Caco-2 (cell line): ENCODE measurements at regions of chr2 and their contacts with region 1.

Region 1: DNA sequence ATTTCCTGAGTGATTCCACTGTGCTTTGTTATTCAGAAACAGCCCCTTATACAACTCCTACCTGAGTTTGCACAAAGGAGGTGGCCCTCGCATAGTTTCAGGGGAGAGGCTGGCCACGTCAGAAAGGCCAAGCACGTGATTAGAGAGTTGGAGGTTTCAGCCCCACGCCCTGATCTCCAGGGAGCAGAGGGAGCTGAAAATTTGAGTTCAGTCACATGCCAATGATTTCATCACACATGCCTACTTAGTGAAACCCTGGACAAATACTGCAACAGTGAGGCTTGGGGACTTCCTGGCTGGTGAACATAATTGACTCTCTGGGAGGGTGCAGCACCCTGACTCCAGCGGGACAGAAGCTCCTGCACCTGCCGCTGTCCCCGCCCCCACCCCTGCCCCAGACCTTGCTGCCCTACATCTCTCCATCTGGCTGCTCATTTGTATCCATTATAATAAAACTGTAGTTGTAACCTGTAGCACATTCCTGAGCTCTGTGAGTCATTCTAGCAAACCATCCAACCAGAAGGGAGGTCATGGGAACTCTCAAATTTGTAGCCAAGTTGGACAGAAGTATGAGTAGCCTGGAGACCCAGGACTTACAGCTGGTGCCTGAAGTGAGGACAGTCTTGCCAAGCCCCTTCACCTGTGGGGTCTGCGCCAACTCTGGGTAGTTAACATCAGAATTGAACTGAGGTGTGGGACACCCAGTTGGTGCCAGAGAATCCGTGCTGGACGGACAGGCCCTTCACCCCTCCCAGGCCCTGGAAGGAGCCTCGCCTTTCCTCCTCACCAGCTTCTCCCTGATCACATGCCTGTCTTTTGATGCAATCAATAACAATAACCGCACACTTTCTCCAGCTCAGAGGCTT is 224.3 kb downstream of the ANAPC1 start:
- DNase-seq: peak; percentile 92
- H3K4me3 ChIP-seq: no peak overlapping the region
- H3K4me3 Mint-ChIP-seq: peak overlapping the region; percentile 51
- H3K27ac Mint-ChIP-seq: peak overlapping the region; percentile 99
- H3K4me1 ChIP-seq: peaks cover 30% of the 10 kb centered on the region
- H3K4me1 Mint-ChIP-seq: peaks cover 35% of the 10 kb centered on the region
- H3K27me3 ChIP-seq: no peaks in the 10 kb centered on the region
- H3K27me3 Mint-ChIP-seq: no peaks in the 10 kb centered on the region
- CTCF ChIP-seq: no peak

Region 2: DNA sequence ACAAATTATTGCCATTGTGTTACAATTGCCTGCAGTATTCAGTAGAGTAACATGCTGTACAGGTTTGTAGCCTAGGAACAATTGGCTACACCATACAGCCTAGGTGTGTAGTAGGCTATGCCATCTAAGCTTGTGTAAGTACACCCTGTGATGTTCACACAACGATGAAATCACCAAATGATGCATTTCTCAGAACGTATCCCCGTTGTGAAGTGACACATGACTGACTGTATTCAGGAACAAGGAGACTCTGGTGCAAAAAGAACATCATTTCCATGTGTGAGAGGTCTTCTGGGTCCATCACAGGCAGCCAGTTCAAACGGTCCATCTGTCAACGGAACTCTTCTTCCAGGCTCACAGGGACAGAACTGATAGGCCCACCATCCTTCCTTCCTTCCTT is 39.4 kb before region 1 on chr2:
- CTCF ChIA-PET with region 1: no interaction called
- POLR2A ChIA-PET with region 1: interaction called, 5 read pairs
- intact Hi-C with region 1: loop called (anchors 2 kb)
- DNase-seq: no peak
- H3K4me3 ChIP-seq: no peak overlapping the region
- H3K4me3 Mint-ChIP-seq: no peak overlapping the region
- H3K27ac Mint-ChIP-seq: no peak overlapping the region
- H3K4me1 ChIP-seq: peaks cover 8% of the 10 kb centered on the region
- H3K4me1 Mint-ChIP-seq: peaks cover 19% of the 10 kb centered on the region
- H3K27me3 ChIP-seq: no peaks in the 10 kb centered on the region
- H3K27me3 Mint-ChIP-seq: no peaks in the 10 kb centered on the region
- CTCF ChIP-seq: no peak

Region 3: GRCh38 chr2:111642586-111643327 is 16.9 kb before region 1 on chr2:
- CTCF ChIA-PET with region 1: no interaction called
- POLR2A ChIA-PET with region 1: interaction called, 14 read pairs
- intact Hi-C with region 1: no loop called
- DNase-seq: no peak
- H3K4me3 ChIP-seq: no peak overlapping the region
- H3K4me3 Mint-ChIP-seq: no peak overlapping the region
- H3K27ac Mint-ChIP-seq: no peak overlapping the region
- H3K4me1 ChIP-seq: no peaks in the 10 kb centered on the region
- H3K4me1 Mint-ChIP-seq: no peaks in the 10 kb centered on the region
- H3K27me3 ChIP-seq: no peaks in the 10 kb centered on the region
- H3K27me3 Mint-ChIP-seq: no peaks in the 10 kb centered on the region
- CTCF ChIP-seq: no peak

Region 4: GRCh38 chr2:111705711-111706336 is 46.2 kb after region 1 on chr2:
- CTCF ChIA-PET with region 1: no interaction called
- POLR2A ChIA-PET with region 1: no interaction called
- intact Hi-C with region 1: no loop called
- DNase-seq: no peak
- H3K4me3 ChIP-seq: no peak overlapping the region
- H3K4me3 Mint-ChIP-seq: no peak overlapping the region
- H3K27ac Mint-ChIP-seq: peak overlapping the region; percentile 46
- H3K4me1 ChIP-seq: 0 out of 2 replicates have a peak, but pooled peaks cover 6% of the 10 kb centered on the region
- H3K4me1 Mint-ChIP-seq: peaks cover 9% of the 10 kb centered on the region
- H3K27me3 ChIP-seq: no peaks in the 10 kb centered on the region
- H3K27me3 Mint-ChIP-seq: no peaks in the 10 kb centered on the region
- CTCF ChIP-seq: no peak

Region 5: GRCh38 chr2:112021781-112022231 is 362.2 kb after region 1 on chr2:
- CTCF ChIA-PET with region 1: no interaction called
- POLR2A ChIA-PET with region 1: no interaction called
- intact Hi-C with region 1: no loop called
- DNase-seq: no peak
- H3K4me3 ChIP-seq: no peak overlapping the region
- H3K4me3 Mint-ChIP-seq: no peak overlapping the region
- H3K27ac Mint-ChIP-seq: no peak overlapping the region
- H3K4me1 ChIP-seq: peaks cover 19% of the 10 kb centered on the region
- H3K4me1 Mint-ChIP-seq: peaks cover 32% of the 10 kb centered on the region
- H3K27me3 ChIP-seq: no peaks in the 10 kb centered on the region
- H3K27me3 Mint-ChIP-seq: no peaks in the 10 kb centered on the region
- CTCF ChIP-seq: no peak